ENCODE measurements at regions of chr10 and their contacts with region 1.

Region 1: GRCh38 chr10:85612833-85613232 is 753.8 kb downstream of the GRID1 start:
- DNase-seq: peak in 6 of 14 experiments; percentile 4 to 51 (median 30)
- ATAC-seq: peak; percentile 43
- H3K4me3 ChIP-seq: no peak overlapping the region
- H3K4me3 Mint-ChIP-seq: peak overlapping the region; percentile 78
- H3K27ac ChIP-seq: no peak overlapping the region
- H3K27ac Mint-ChIP-seq: peak overlapping the region; percentile 77
- H3K4me1 ChIP-seq: peaks cover 50% of the 10 kb centered on the region
- H3K4me1 Mint-ChIP-seq: peaks cover 76% of the 10 kb centered on the region
- H3K27me3 ChIP-seq: no peaks in the 10 kb centered on the region
- H3K27me3 Mint-ChIP-seq: no peaks in the 10 kb centered on the region
- CTCF ChIP-seq: peak; percentile 56

Region 2: DNA sequence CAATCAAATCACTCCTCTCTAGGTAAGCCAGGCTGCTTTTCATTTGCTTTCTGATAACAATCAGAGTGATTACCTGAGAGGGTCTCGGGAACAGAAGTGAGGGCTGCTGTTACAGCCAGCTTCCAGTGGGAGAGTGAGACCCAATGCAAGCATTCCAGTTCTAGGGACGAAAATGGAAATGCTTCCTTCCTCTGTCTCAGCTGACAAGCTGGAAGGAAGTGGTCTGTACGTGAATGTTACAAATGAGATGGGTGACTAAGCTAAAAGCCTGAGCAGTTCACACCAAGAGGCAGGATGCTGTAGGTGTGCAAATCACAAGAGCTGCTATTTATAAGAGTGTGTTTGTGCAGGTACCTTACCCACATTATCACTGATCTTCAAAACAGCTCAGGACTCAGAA is 18.6 kb before region 1 on chr10:
- CTCF ChIA-PET with region 1: no interaction called
- POLR2A ChIA-PET with region 1: interaction called, 28 read pairs
- intact Hi-C with region 1: loop called in 1 of 2 experiments (anchors 2 kb)
- DNase-seq: peak in 1 of 14 experiments; percentile 36
- ATAC-seq: peak; percentile 43
- H3K4me3 ChIP-seq: no peak overlapping the region
- H3K4me3 Mint-ChIP-seq: no peak overlapping the region
- H3K27ac ChIP-seq: no peak overlapping the region
- H3K27ac Mint-ChIP-seq: peak overlapping the region; percentile 19
- H3K4me1 ChIP-seq: peaks cover 18% of the 10 kb centered on the region
- H3K4me1 Mint-ChIP-seq: peaks cover 19% of the 10 kb centered on the region
- H3K27me3 ChIP-seq: no peaks in the 10 kb centered on the region
- H3K27me3 Mint-ChIP-seq: no peaks in the 10 kb centered on the region
- CTCF ChIP-seq: no peak

Region 3: DNA sequence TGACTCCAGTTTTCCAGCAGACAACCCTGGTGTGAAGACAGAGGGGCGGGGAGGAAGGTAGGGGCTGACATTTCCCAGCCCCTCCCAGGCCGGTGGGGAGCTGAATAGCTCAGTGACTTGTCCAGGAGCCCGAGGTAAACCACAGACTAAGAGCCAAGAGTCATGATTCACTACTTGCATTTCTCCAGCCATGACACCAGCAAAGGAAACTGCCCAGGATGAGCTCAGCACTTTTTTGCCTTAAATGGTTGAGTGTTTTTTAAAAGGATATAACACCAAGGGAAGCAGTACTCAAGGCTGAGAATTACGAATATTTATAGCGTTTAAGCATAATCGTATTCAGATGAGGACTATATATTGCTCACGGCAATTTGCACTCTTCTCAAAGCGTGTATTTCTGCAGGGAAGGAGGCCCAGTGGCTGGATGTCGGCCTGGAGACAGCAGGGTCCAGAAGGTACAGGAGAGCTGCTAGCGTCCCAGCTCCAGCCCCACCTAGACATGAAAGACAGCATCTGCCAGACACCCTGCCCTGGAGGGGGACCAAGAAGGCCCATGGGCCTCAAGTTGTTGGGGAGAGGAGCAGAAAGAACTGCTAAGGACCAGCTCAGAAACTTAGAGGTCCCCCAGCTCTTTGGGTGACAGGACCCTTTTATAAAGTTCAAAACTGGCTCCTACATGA is 612.4 kb after region 1 on chr10:
- CTCF ChIA-PET with region 1: no interaction called
- POLR2A ChIA-PET with region 1: no interaction called
- intact Hi-C with region 1: no loop called
- DNase-seq: peak in 2 of 14 experiments; percentile 17 to 34
- ATAC-seq: no peak
- H3K4me3 ChIP-seq: no peak overlapping the region
- H3K4me3 Mint-ChIP-seq: no peak overlapping the region
- H3K27ac ChIP-seq: no peak overlapping the region
- H3K27ac Mint-ChIP-seq: no peak overlapping the region
- H3K4me1 ChIP-seq: no peaks in the 10 kb centered on the region
- H3K4me1 Mint-ChIP-seq: no peaks in the 10 kb centered on the region
- H3K27me3 ChIP-seq: no peaks in the 10 kb centered on the region
- H3K27me3 Mint-ChIP-seq: peaks cover 4% of the 10 kb centered on the region
- CTCF ChIP-seq: no peak

Region 4: DNA sequence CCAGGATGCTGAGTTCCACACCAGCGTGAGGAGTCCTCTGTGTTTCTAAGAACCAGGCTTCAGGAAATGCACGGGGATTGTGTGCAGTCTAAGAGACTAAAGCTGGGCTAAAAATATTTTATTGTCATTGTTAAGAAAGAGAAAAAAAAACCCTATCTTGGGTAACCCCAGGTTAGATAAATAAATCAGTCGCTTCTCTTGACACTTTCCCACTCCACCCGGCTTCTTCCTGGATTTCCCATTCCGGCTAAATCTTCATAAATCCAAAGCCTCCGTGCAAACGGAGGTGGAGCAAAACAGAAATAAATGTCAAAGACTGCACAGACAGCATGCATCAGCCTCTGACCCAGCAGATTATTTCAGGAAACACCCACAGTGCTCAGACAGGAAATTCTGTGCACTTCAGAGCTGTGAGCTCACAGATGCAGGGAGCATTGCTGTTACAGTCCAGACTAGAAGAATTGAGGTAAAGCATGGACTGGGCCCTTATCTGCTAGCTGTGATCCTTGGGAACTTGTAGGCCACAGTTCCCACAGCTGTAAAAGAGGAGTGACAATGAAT is 798.5 kb after region 1 on chr10:
- CTCF ChIA-PET with region 1: no interaction called
- POLR2A ChIA-PET with region 1: no interaction called
- intact Hi-C with region 1: loop called in 1 of 2 experiments (anchors 10 kb)
- DNase-seq: peak in 7 of 14 experiments; percentile 15 to 65 (median 50)
- ATAC-seq: peak; percentile 55
- H3K4me3 ChIP-seq: peak overlapping the region; percentile 1
- H3K4me3 Mint-ChIP-seq: peak overlapping the region; percentile 83
- H3K27ac ChIP-seq: peak overlapping the region; percentile 54
- H3K27ac Mint-ChIP-seq: peak overlapping the region; percentile 89
- H3K4me1 ChIP-seq: peaks cover 47% of the 10 kb centered on the region
- H3K4me1 Mint-ChIP-seq: peaks cover 60% of the 10 kb centered on the region
- H3K27me3 ChIP-seq: no peaks in the 10 kb centered on the region
- H3K27me3 Mint-ChIP-seq: no peaks in the 10 kb centered on the region
- CTCF ChIP-seq: no peak